ENCODE measurements at regions of chr6 and their contacts with region 1.

Region 1: DNA sequence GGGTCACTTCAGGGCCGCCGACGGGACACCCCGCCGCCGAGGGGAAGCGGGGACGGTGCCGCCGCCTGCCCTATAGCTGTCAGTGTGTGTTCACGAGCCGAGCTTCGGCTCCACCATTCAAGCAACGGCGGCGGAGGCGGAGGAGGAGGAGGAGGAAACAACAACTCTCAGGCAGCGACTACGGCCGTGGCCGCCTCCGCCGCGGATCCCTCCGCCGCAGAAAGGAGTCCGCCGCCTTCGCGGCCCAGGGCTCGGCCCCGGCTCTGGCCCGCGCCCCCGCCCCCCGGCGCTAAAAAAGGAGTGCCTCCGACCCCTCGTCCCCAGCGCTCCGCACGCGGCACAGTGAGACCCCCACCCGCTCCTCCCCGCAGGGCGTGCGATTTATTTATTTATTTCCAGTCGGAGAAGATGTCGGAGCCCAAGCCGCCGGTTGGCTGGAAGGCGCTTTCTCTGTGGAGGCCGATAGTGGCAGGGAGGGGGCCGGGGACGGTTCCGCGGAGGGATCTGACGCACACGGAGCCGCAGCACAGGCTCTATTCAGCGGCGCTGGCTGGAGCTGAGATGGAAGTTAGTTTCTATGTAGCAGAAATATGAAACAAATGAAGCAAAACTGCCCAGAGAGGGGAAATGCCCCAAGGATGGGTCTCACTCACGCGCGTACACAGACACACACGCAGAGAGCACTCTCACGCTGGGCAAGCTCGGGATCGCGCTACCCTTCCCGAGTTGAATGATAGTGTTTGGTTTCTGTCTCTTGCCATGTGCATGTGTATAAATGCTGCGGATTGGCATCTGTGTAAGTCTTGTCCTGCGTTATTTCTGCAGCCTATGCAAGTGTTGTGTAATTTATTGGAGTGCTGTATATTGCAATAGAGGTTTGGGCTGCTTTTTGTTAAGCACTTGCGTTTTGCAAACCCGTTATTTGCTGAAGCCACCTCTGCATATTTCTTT is at the start of gene PHIP:
- DNase-seq: peak; percentile 87
- H3K4me3 Mint-ChIP-seq: peak within 1 kb of the TSS; percentile 93
- H3K27ac Mint-ChIP-seq: peak within 1 kb of the TSS; percentile 98
- H3K4me1 Mint-ChIP-seq: peaks cover 34% of the 10 kb centered on the region
- H3K27me3 Mint-ChIP-seq: peaks cover 20% of the 10 kb centered on the region
- total RNA-seq, gene PHIP: 34.8 and 37.2 TPM in 2 replicates

Region 2: DNA sequence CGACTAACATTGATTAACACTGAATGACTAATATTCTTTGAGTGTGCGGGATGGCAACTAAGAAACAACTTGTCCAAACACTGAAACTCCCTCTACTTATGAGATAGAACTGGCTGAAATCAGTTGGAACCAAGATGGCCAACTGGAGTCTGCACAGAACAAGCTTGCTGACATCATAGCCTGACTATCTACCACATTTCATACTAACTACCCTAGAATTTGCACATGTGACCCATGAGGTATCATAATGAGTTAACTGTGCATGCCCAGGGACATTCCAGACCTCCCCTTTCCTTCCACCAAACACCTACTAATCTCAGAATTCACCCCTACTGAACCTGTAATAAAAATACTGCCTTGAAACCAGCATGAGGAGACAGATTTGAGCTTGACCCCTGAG is 43.5 kb before region 1 on chr6:
- intact Hi-C with region 1: loop called (anchors 1 kb)
- DNase-seq: no peak
- H3K4me3 Mint-ChIP-seq: no peak overlapping the region
- H3K27ac Mint-ChIP-seq: peak overlapping the region; percentile 25
- H3K4me1 Mint-ChIP-seq: peaks cover 39% of the 10 kb centered on the region
- H3K27me3 Mint-ChIP-seq: no peaks in the 10 kb centered on the region

Region 3: DNA sequence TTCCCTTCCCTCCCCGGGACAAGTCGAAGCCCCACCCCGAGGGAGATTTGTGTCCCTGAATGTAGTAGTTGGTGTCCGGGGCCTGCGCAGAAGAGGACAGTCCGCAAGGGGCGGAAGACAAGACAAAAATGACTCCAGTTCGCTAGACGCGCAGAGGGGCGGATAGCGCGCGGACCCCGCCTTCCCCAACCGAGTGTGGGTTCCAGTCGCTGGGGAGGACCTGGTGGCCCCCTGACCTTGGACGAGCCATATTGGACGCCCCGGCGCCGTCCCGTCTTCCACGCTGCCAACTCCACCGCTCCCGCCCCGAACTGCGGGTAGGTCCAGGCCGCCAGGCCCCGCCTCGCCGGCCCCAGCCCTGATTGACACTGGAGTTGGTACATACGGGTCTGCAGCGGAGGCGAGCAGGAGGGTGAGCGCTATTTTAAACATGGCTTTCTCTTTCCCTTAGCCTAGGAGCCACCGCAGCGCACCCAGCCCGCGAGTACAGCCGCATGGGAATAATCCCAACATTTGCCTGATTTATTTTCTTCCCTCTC is 155.3 kb after region 1 on chr6:
- intact Hi-C with region 1: loop called (anchors 1 kb)
- DNase-seq: peak; percentile 72
- H3K4me3 Mint-ChIP-seq: peak overlapping the region; percentile 95
- H3K27ac Mint-ChIP-seq: peak overlapping the region; percentile 92
- H3K4me1 Mint-ChIP-seq: peaks cover 41% of the 10 kb centered on the region
- H3K27me3 Mint-ChIP-seq: no peaks in the 10 kb centered on the region

Region 4: GRCh38 chr6:79536954-79537747 is 458.8 kb after region 1 on chr6 and contains the start of gene LCA5:
- intact Hi-C with region 1: loop called (anchors 1 kb)
- DNase-seq: peak; percentile 81
- H3K4me3 Mint-ChIP-seq: no peak within 1 kb of the TSS
- H3K27ac Mint-ChIP-seq: no peak within 1 kb of the TSS
- H3K4me1 Mint-ChIP-seq: no peaks in the 10 kb centered on the region
- H3K27me3 Mint-ChIP-seq: peaks cover 17% of the 10 kb centered on the region
- total RNA-seq, gene LCA5: 0.08 and 0.17 TPM in 2 replicates

Region 5: DNA sequence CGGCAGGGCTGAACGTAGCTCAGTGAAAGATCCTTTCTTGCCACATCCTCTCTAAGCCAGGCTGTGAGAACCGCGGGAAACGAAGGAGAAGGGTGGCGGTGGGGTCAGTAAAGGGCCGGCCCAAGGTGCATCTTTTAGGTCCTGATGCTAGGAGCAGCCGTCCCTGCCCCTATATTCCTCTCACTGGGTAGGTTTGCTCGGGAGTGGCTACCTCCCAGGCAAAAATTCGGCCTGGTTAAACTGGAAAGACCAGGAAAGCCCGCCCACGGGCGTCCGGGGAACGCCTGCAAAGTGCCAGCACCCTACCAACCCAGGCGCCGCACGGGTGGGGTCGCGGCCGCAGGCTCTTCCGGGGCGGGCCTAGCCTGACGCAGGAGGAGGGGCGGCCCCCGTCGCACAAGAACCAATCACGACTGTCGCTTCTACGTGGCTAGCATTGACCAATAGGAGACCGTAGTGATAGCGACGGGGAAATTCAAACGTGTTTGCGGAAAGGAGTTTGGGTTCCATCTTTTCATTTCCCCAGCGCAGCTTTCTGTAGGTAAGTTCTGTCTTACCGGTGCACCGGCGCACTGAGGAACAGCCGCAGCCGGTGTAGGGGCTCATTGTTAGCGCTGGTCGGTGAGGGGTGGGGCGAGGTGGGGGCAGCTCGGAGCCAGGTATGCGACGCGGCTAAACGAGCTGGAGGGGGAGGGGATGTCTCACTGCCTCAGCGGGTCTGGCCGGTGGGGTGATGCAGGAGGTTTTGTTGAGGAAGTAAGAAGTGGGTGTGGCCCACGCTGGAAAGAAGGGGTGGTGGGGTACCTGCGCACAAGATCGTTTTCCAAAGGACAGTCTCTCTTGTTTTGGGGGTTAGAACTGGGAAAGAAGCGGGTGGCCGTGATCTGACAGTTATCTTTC is 926.1 kb after region 1 on chr6 and contains the start of gene TTK:
- intact Hi-C with region 1: loop called (anchors 5 kb)
- DNase-seq: peak; percentile 92
- H3K4me3 Mint-ChIP-seq: peak within 1 kb of the TSS; percentile 95
- H3K27ac Mint-ChIP-seq: peak within 1 kb of the TSS; percentile 94
- H3K4me1 Mint-ChIP-seq: peaks cover 50% of the 10 kb centered on the region
- H3K27me3 Mint-ChIP-seq: no peaks in the 10 kb centered on the region
- total RNA-seq, gene TTK: 22.4 and 23.5 TPM in 2 replicates

Region 6: DNA sequence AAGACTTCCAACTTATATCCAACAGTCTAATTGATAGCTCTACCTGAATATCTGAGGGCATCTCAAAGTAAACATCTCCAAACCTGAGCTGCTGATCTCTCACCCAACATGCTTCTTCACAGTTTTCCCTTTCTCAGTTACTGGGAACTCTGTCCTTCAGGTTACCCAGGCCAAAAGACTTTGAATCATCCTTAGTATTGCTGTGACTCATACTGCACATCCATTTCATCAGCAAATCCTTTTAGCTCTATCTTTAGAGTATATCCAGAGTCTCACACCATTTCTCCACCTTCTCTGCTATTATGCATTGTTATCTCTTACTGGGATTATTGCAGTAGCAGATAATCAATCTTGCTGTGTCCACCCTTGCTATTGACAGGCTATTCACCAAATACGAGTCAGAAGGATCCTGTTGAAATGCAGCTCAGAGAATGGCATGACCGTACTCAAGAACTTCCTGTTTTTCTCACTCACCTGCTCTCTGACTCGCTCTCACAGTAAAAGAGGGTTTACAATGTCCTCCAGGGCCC is 1085.4 kb after region 1 on chr6:
- intact Hi-C with region 1: loop called (anchors 10 kb)
- DNase-seq: no peak
- H3K4me3 Mint-ChIP-seq: no peak overlapping the region
- H3K27ac Mint-ChIP-seq: no peak overlapping the region
- H3K4me1 Mint-ChIP-seq: no peaks in the 10 kb centered on the region
- H3K27me3 Mint-ChIP-seq: no peaks in the 10 kb centered on the region

Measured in activated T-helper 1 cell treated with anti-CD3 and anti-CD28 coated beads, Interleukin-12 subunit alpha, Interleukin-12 subunit beta, Interleukin-2, Interleukin-4 antibody, amounts not matched to agents 30 ng/mL and 10 ng/mL and 1 ng/mL, durations not matched to agents 14 hours and 24 hours and 36 hours (primary cell).